Activated naive CD4-positive, alpha-beta T cell treated with anti-CD3 and anti-CD28 coated beads for 36 hours (primary cell): ENCODE measurements at regions of chr2 and their contacts with region 1.

Region 1: GRCh38 chr2:235746257-235747084 is 252.6 kb downstream of the AGAP1 start:
- DNase-seq: peak; percentile 75
- H3K4me3 Mint-ChIP-seq: no peak overlapping the region
- H3K27ac Mint-ChIP-seq: no peak overlapping the region
- H3K4me1 Mint-ChIP-seq: no peaks in the 10 kb centered on the region
- H3K27me3 Mint-ChIP-seq: peaks cover 9% of the 10 kb centered on the region

Region 2: DNA sequence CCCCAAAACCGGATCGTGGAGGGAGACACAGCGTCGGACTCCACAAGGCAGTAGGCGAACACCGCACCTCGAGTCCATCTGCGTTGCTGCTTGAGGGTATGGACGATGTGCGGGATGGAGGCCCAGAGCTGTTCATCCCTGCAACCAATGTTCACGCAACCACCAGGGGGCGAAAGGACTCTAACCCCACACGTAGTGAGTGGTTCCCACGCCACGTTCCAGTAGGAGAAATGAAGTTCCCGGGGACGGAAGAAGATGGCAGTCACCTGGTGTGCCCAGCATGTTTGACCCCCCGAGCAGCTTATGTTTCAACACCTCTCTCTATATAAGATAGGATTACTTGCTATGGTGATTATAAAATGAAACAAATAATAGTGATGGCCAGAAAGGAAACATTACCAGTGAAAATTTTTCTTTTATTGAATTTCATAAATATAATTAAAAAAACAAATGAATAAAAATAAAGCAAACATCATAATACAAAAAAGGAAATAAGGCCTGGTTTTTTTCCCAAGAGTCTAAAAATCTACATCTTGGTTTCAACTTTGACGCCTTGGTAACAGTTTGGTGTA is 610.4 kb before region 1 on chr2:
- CTCF ChIA-PET with region 1: no interaction called
- intact Hi-C with region 1: loop called (anchors 1 kb)
- DNase-seq: peak; percentile 68
- H3K4me3 Mint-ChIP-seq: no peak overlapping the region
- H3K27ac Mint-ChIP-seq: no peak overlapping the region
- H3K4me1 Mint-ChIP-seq: no peaks in the 10 kb centered on the region
- H3K27me3 Mint-ChIP-seq: peaks cover 35% of the 10 kb centered on the region

Region 3: GRCh38 chr2:235300368-235301201 is 445.9 kb before region 1 on chr2:
- CTCF ChIA-PET with region 1: no interaction called
- intact Hi-C with region 1: no loop called
- DNase-seq: no peak
- H3K4me3 Mint-ChIP-seq: no peak overlapping the region
- H3K27ac Mint-ChIP-seq: no peak overlapping the region
- H3K4me1 Mint-ChIP-seq: no peaks in the 10 kb centered on the region
- H3K27me3 Mint-ChIP-seq: peaks cover 31% of the 10 kb centered on the region

Region 4: GRCh38 chr2:235595422-235596010 is 151.0 kb before region 1 on chr2:
- CTCF ChIA-PET with region 1: interaction called, 52 read pairs
- intact Hi-C with region 1: loop called (anchors 1 kb)
- DNase-seq: peak; percentile 64
- H3K4me3 Mint-ChIP-seq: no peak overlapping the region
- H3K27ac Mint-ChIP-seq: no peak overlapping the region
- H3K4me1 Mint-ChIP-seq: no peaks in the 10 kb centered on the region
- H3K27me3 Mint-ChIP-seq: peaks cover 10% of the 10 kb centered on the region

Region 5: DNA sequence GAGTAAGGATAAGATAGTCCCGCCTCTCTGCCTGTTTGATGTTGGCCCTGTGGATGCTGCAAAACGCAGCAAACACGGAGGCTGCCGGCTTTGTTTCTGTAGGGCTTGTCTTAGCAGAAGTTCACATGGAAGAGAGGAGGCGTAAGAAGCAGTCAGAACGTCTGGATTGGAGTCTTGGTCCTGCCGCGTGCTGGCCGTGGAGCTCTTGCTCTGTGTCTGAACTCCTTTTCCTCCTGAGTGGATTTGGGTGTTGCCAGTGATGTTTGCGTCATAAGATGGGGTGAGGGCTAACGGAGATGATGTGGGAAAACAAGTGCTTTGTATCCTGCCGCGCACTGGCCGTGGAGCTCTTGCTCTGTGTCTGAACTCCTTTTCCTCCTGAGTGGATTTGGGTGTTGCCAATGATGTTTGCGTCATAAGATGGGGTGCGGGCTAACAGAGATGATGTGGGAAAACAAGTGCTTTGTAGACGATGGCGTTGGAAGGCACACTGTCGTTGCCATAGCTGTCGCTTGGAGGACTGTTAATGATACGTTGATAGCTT is 11.7 kb before region 1 on chr2:
- CTCF ChIA-PET with region 1: no interaction called
- intact Hi-C with region 1: no loop called
- DNase-seq: no peak
- H3K4me3 Mint-ChIP-seq: no peak overlapping the region
- H3K27ac Mint-ChIP-seq: no peak overlapping the region
- H3K4me1 Mint-ChIP-seq: no peaks in the 10 kb centered on the region
- H3K27me3 Mint-ChIP-seq: peaks cover 16% of the 10 kb centered on the region